CD4-positive, alpha-beta T cell (primary cell): ENCODE measurements at regions of chr20 and their contacts with region 1.

Region 1: GRCh38 chr20:5714261-5715041 is 35.8 kb upstream of the SHLD1 start:
- DNase-seq: peak; percentile 69 to 98 (median 82)
- ATAC-seq: peak; percentile 89
- H3K4me3 ChIP-seq: no peak overlapping the region
- H3K4me3 Mint-ChIP-seq: peak overlapping the region; percentile 46
- H3K27ac ChIP-seq: peak overlapping the region; percentile 69 to 92
- H3K27ac Mint-ChIP-seq: peak overlapping the region; percentile 74
- H3K4me1 ChIP-seq: peaks cover 38% of the 10 kb centered on the region
- H3K4me1 Mint-ChIP-seq: peaks cover 49% of the 10 kb centered on the region
- H3K27me3 ChIP-seq: no peaks in the 10 kb centered on the region
- H3K27me3 Mint-ChIP-seq: no peaks in the 10 kb centered on the region
- CTCF ChIP-seq: no peak

Region 2: GRCh38 chr20:5642155-5642981 is 72.1 kb before region 1 on chr20:
- CTCF ChIA-PET with region 1: no interaction called
- POLR2A ChIA-PET with region 1: interaction called, 13 read pairs
- intact Hi-C with region 1: no loop called
- DNase-seq: peak in 1 of 14 experiments; percentile 34
- ATAC-seq: no peak
- H3K4me3 ChIP-seq: no peak overlapping the region
- H3K4me3 Mint-ChIP-seq: peak overlapping the region; percentile 5
- H3K27ac ChIP-seq: peak overlapping the region in 1 of 2 donors; percentile 3
- H3K27ac Mint-ChIP-seq: peak overlapping the region; percentile 19
- H3K4me1 ChIP-seq: peaks cover 28% of the 10 kb centered on the region
- H3K4me1 Mint-ChIP-seq: peaks cover 40% of the 10 kb centered on the region
- H3K27me3 ChIP-seq: no peaks in the 10 kb centered on the region
- H3K27me3 Mint-ChIP-seq: no peaks in the 10 kb centered on the region
- CTCF ChIP-seq: no peak

Region 3: GRCh38 chr20:5737966-5738365 is 23.5 kb after region 1 on chr20:
- CTCF ChIA-PET with region 1: interaction called, 3 read pairs
- POLR2A ChIA-PET with region 1: interaction called, 13 read pairs
- intact Hi-C with region 1: loop called in 1 of 2 experiments (anchors 1 kb)
- DNase-seq: peak in 4 of 14 experiments; percentile 23 to 35 (median 32)
- ATAC-seq: peak; percentile 12
- H3K4me3 ChIP-seq: no peak overlapping the region
- H3K4me3 Mint-ChIP-seq: peak overlapping the region; percentile 27
- H3K27ac ChIP-seq: peak overlapping the region in 1 of 2 donors; percentile 59
- H3K27ac Mint-ChIP-seq: peak overlapping the region; percentile 91
- H3K4me1 ChIP-seq: peaks cover 28% of the 10 kb centered on the region
- H3K4me1 Mint-ChIP-seq: peaks cover 44% of the 10 kb centered on the region
- H3K27me3 ChIP-seq: no peaks in the 10 kb centered on the region
- H3K27me3 Mint-ChIP-seq: no peaks in the 10 kb centered on the region
- CTCF ChIP-seq: no peak

Region 4: DNA sequence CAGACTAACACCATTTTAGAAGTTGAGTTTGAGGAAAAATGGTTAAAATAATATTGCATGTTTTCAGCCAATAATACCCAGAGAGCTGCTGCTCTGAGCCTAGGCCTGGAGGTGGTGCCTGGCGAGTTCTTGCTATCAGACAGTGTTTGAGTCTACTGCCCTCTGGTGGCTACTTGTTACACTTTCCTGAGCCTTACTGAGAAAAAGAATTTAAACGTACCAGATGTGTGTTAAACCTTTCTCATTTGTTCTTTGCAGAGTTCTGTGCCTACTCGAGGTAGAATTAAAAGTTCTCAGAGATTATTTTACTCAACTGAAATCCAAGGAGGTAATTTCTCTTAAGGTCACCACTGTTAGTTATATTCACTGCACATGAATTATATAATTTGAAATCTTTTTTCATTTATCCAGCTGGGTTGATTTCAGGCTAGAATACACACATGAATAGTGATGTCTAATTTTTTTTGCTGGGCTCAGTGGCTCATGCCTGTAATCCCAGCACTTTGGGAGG is 74.0 kb after region 1 on chr20:
- CTCF ChIA-PET with region 1: interaction called, 10 read pairs
- POLR2A ChIA-PET with region 1: interaction called, 5 read pairs
- intact Hi-C with region 1: loop called in 1 of 2 experiments (anchors 2 kb)
- DNase-seq: peak; percentile 55 to 93 (median 74)
- ATAC-seq: peak; percentile 98
- H3K4me3 ChIP-seq: no peak overlapping the region
- H3K4me3 Mint-ChIP-seq: no peak overlapping the region
- H3K27ac ChIP-seq: no peak overlapping the region
- H3K27ac Mint-ChIP-seq: peak overlapping the region; percentile 16
- H3K4me1 ChIP-seq: no peaks in the 10 kb centered on the region
- H3K4me1 Mint-ChIP-seq: peaks cover 23% of the 10 kb centered on the region
- H3K27me3 ChIP-seq: no peaks in the 10 kb centered on the region
- H3K27me3 Mint-ChIP-seq: no peaks in the 10 kb centered on the region
- CTCF ChIP-seq: peak; percentile 92

Region 5: GRCh38 chr20:6008254-6008653 is 293.8 kb after region 1 on chr20:
- CTCF ChIA-PET with region 1: no interaction called
- POLR2A ChIA-PET with region 1: no interaction called
- intact Hi-C with region 1: loop called in 1 of 2 experiments (anchors 1 kb)
- DNase-seq: peak in 3 of 14 experiments; percentile 7 to 60 (median 51)
- ATAC-seq: no peak
- H3K4me3 ChIP-seq: no peak overlapping the region
- H3K4me3 Mint-ChIP-seq: peak overlapping the region; percentile 99
- H3K27ac ChIP-seq: no peak overlapping the region
- H3K27ac Mint-ChIP-seq: peak overlapping the region; percentile 90
- H3K4me1 ChIP-seq: peaks cover 7% of the 10 kb centered on the region
- H3K4me1 Mint-ChIP-seq: peaks cover 52% of the 10 kb centered on the region
- H3K27me3 ChIP-seq: no peaks in the 10 kb centered on the region
- H3K27me3 Mint-ChIP-seq: no peaks in the 10 kb centered on the region
- CTCF ChIP-seq: no peak